ENCODE measurements at regions of chr19 and their contacts with region 1.

Region 1: DNA sequence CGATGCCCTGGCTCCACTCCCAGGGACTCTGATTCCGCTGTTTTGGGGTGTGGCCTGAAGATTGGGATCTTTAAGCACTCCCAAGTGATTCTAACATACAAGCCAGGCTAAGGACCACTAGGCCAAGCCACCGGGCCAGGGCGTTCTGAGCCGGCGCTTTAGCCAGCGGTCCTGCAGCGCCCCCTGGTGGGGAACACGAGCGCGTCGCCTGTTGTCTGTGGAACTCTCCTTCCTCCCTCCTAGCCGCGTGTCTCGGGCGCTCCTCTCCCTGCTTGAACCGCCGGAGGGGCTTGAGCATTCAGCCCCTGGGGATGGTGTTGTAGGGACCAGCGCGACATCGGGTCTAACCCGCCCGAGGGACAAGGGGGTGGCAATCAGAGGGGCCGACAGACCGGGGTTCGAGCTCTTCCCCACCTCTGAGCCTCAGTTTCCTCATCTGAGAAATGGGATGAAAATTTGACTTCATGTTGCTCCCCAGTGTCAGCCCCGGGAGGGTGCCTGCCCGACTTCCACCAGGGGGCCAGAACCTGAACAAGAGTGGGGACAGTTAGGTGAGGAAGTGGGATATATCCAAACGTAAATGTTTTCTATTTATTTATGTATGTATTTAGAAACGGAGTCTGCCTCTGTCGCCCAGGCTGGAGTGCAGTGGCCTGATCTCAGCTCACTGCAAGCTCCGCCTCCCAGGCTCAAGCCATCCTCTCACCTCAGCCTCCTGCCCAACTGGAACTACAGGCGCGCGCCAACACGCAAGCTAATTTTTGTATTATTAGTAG is 18.0 kb upstream of the PNMA8B start:
- H3K4me3 ChIP-seq: no peak overlapping the region
- H3K27ac ChIP-seq: no peak overlapping the region
- H3K4me1 ChIP-seq: no peaks in the 10 kb centered on the region
- CTCF ChIP-seq: peak; percentile 88

Region 2: GRCh38 chr19:46339446-46339845 is 174.2 kb before region 1 on chr19:
- CTCF ChIA-PET with region 1: no interaction called
- POLR2A ChIA-PET with region 1: no interaction called
- H3K4me3 ChIP-seq: no peak overlapping the region
- H3K27ac ChIP-seq: no peak overlapping the region
- H3K4me1 ChIP-seq: no peaks in the 10 kb centered on the region
- CTCF ChIP-seq: no peak

Region 3: GRCh38 chr19:46404055-46404752 is 109.4 kb before region 1 on chr19:
- CTCF ChIA-PET with region 1: interaction called, 57 read pairs
- POLR2A ChIA-PET with region 1: no interaction called
- H3K4me3 ChIP-seq: no peak overlapping the region
- H3K27ac ChIP-seq: no peak overlapping the region
- H3K4me1 ChIP-seq: peaks cover 3% of the 10 kb centered on the region; the same call in 1 of the 2 replicates
- CTCF ChIP-seq: no peak

Region 4: GRCh38 chr19:46461537-46461936 is 52.1 kb before region 1 on chr19:
- CTCF ChIA-PET with region 1: no interaction called
- POLR2A ChIA-PET with region 1: no interaction called
- H3K4me3 ChIP-seq: no peak overlapping the region
- H3K27ac ChIP-seq: no peak overlapping the region
- H3K4me1 ChIP-seq: no peaks in the 10 kb centered on the region
- CTCF ChIP-seq: no peak

Region 5: DNA sequence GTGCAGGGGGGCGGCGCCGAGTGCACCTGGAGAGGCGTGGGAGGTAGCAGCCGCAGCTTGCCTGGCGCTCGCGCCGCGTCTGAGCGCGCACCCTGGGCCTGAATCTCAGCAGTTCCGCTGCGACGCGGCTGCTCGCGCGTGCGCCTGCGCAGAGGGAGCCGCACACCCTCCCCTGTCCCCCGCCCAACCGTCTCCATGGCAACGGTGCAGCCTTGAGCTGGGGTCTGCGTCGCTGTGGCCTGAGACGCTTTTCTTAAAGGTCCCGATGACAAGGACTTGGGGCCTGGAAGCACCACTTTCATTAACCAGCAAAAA is 17.9 kb before region 1 on chr19 and contains the start of gene PNMA8B:
- CTCF ChIA-PET with region 1: interaction called, 11 read pairs
- POLR2A ChIA-PET with region 1: no interaction called
- H3K4me3 ChIP-seq: peak within 1 kb of the TSS; percentile 30
- H3K27ac ChIP-seq: no peak within 1 kb of the TSS
- H3K4me1 ChIP-seq: 0 out of 2 replicates have a peak, but pooled peaks cover 3% of the 10 kb centered on the region
- CTCF ChIP-seq: no peak

Region 6: GRCh38 chr19:46529622-46530462 is 16.2 kb after region 1 on chr19:
- CTCF ChIA-PET with region 1: interaction called, 61 read pairs
- POLR2A ChIA-PET with region 1: interaction called, 3 read pairs
- H3K4me3 ChIP-seq: no peak overlapping the region
- H3K27ac ChIP-seq: no peak overlapping the region
- H3K4me1 ChIP-seq: no peaks in the 10 kb centered on the region
- CTCF ChIP-seq: peak; percentile 89

Region 7: GRCh38 chr19:46537136-46538097 is 23.8 kb after region 1 on chr19:
- CTCF ChIA-PET with region 1: interaction called, 40 read pairs
- POLR2A ChIA-PET with region 1: no interaction called
- H3K4me3 ChIP-seq: no peak overlapping the region
- H3K27ac ChIP-seq: no peak overlapping the region
- H3K4me1 ChIP-seq: no peaks in the 10 kb centered on the region
- CTCF ChIP-seq: peak; percentile 62

Region 8: GRCh38 chr19:46542428-46543230 is 29.0 kb after region 1 on chr19:
- CTCF ChIA-PET with region 1: interaction called, 40 read pairs
- POLR2A ChIA-PET with region 1: no interaction called
- H3K4me3 ChIP-seq: no peak overlapping the region
- H3K27ac ChIP-seq: no peak overlapping the region
- H3K4me1 ChIP-seq: no peaks in the 10 kb centered on the region; the same call in 1 of the 2 replicates
- CTCF ChIP-seq: peak; percentile 75

Region 9: DNA sequence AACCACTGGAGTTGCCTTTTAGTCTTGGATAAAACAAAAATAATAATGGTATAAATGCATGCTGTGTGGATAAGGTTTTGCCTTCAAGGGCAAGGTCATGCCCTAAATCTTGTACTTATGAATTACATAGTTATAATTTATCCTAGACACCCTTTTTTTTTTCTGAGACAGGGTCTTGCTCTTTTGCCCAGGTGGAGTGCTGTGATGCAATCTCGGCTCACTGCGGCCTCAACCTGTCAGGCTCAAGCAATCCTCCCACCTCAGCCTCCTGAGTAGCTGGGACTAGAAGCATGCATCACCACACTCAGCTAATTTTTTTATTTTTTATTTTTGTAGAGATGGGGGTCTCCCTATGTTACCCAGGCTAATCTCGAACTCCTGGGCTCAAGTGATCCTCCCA is 155.0 kb after region 1 on chr19:
- CTCF ChIA-PET with region 1: no interaction called
- POLR2A ChIA-PET with region 1: no interaction called
- H3K4me3 ChIP-seq: no peak overlapping the region
- H3K27ac ChIP-seq: no peak overlapping the region
- H3K4me1 ChIP-seq: no peaks in the 10 kb centered on the region
- CTCF ChIP-seq: no peak

Region 10: DNA sequence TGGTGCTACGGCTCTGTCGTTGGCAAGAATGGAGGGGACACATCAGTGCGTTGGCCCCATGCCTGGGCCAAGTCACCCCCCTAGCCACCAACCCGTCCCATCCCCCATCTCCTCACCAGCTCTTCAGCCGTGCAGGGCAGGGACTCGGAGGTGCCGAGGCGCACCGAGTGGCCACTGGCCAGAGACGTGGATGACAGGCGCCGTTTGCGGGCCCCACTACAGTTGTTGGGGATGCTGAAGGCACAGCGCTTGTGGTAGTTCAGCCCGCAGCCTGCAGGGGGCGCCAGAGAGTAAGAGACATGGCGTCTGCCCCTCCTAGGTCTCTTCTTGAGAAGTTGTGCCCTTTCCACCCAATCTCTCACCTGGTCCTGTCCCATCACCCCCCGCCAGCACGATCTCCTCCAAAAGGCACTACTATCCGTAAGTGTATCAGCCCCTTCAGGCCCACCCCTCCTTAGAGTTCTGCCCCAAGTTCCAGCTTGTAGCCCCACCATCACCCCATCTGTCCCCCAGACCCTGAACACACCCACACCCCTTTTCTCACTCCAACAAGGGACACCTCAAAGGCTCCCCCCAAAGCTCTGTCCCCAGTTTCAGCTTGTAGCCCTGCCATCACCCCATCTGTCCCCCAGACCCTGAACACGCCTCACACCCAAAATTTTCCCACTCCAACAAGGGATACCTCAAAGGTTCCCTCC is 190.9 kb after region 1 on chr19:
- CTCF ChIA-PET with region 1: no interaction called
- POLR2A ChIA-PET with region 1: no interaction called
- H3K4me3 ChIP-seq: no peak overlapping the region
- H3K27ac ChIP-seq: no peak overlapping the region
- H3K4me1 ChIP-seq: no peaks in the 10 kb centered on the region
- CTCF ChIP-seq: peak; percentile 91

Region 11: DNA sequence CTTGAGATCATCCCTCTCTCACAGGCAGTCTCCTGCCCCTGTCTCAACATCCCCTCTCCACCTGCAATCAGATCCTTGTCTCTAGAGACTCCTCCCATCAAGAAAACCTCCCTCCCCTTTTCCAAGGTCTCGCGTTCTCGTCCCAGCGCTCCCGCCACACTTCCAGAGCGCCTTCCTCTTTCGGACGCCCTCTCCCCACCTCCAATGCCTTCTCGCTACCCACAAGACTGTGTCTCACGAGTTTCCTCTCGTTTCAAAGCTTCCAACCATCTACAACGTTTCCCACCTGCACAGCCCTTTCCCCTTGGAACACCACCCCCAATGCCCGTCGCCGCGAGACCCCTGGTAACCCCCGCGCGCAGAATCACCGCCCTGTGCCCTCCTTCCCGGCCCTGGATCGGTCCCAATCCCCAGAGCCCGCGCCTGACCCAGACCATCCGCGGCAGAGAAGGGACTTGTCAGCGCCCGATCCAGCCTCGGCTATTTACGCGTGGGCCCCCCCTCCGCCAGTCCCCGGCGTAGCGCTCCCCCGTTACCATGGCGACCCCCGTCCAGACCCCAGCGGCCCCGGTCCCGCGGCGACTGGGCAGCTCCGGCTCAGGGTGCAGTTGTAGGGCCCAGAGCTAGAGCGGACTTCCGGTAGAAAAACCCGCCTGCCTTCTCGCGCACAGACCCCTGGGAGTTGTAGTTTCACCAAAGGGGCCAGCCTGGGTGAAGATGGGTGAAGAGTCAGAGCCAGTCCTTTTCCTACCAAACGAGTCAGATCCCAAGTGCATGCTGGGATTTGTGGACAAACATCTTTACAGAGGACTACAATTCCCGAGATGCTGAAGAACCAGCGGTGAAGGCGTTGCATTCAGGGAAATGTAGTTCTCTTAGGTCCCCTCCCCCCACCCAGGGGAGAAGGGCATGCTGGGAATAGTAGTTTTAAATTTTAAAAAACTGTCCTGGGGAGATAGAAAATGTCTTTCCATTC is 336.9 kb after region 1 on chr19 and contains the start of gene AP2S1:
- CTCF ChIA-PET with region 1: no interaction called
- POLR2A ChIA-PET with region 1: interaction called, 10 read pairs
- H3K4me3 ChIP-seq: peak within 1 kb of the TSS; percentile 78
- H3K27ac ChIP-seq: peak within 1 kb of the TSS; percentile 97
- H3K4me1 ChIP-seq: peaks cover 7% of the 10 kb centered on the region
- CTCF ChIP-seq: peak; percentile 39; the same call in 1 of the 2 replicates